ENCODE measurements at regions of chr13 and their contacts with region 1.

Region 1: DNA sequence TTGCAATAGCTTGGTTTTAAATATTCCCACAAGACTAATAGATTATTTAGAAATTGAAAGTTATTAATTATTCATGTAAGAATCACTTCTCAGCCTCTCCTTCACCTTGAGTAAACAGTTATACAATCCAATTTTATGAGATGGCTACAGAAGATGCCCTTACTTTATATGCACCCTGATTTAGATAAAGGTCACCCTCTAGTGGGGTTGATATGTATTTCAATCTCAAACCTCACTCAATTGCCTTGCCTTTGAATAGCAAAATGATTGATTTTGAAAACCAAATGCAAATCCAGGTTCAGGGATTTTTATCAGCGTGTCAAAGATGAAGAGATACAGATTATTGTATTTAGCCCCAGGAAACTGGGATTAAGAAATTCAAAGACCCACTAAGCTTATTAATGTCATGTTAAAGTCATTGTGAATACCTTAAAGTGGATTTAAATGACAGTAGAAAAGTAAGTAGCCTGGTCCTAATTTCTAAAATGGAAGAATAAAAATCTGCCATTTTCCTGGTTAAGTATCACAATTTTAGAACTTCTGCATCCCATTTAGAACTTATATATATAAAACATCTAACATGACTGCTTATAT is 305.1 kb downstream of the ITGBL1 start:
- DNase-seq: no peak
- H3K4me3 ChIP-seq: no peak overlapping the region
- H3K27ac ChIP-seq: no peak overlapping the region
- H3K4me1 ChIP-seq: no peaks in the 10 kb centered on the region
- H3K27me3 ChIP-seq: peaks cover 0 to 9% (median 0%) of the 10 kb centered on the region in 7 donors
- CTCF ChIP-seq: peak in 7 of 11 experiments; percentile 12 to 53 (median 42)
- POLR2A ChIP-seq: no peak

Region 2: DNA sequence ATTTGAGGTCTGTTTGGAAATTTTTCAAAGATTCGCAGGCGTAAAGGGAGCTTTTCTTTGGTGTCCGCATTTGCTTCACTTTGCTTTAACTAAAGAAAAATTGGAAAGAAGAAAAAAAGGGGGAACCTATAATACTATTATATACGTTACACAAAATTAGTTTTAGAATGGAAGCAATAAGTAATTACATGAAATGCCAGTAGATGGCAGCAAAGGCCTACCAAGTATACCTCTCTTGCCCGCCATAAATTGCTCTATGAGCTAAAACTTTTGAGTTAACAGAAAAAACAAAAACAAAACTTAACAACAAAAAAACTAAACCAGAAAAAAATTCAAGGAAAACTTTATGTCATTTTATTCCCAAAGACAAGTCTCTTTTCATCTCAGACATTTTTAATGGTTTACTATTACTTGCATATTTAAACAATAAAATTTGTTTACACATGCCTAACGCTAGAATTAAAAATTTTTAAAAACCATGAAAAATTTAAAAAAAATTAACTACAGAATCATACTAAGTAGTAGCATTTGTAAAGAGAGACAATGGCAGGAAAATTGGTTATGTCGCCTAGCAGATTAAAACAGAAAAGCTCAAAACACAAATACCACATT is 612.6 kb before region 1 on chr13:
- intact Hi-C with region 1: no loop called
- DNase-seq: no peak
- H3K4me3 ChIP-seq: no peak overlapping the region
- H3K27ac ChIP-seq: no peak overlapping the region
- H3K4me1 ChIP-seq: no peaks in the 10 kb centered on the region
- H3K27me3 ChIP-seq: peaks cover 0 to 64% (median 0%) of the 10 kb centered on the region in 7 donors
- CTCF ChIP-seq: peak in 10 of 11 experiments; percentile 46 to 71 (median 64)
- POLR2A ChIP-seq: no peak

Region 3: GRCh38 chr13:101514788-101515187 is 242.8 kb before region 1 on chr13:
- intact Hi-C with region 1: loop called (anchors 5 kb)
- DNase-seq: no peak
- H3K4me3 ChIP-seq: no peak overlapping the region
- H3K27ac ChIP-seq: no peak overlapping the region
- H3K4me1 ChIP-seq: no peaks in the 10 kb centered on the region
- H3K27me3 ChIP-seq: no peaks in the 10 kb centered on the region
- CTCF ChIP-seq: peak in 9 of 11 experiments; percentile 34 to 66 (median 52)
- POLR2A ChIP-seq: no peak

Measured in spleen (tissue), 13 donors.